Activated B cell treated with CpG ODN at 0.5 μM for 24 hours (primary cell): ENCODE measurements at regions of chr9 and their contacts with region 1.

Region 1: DNA sequence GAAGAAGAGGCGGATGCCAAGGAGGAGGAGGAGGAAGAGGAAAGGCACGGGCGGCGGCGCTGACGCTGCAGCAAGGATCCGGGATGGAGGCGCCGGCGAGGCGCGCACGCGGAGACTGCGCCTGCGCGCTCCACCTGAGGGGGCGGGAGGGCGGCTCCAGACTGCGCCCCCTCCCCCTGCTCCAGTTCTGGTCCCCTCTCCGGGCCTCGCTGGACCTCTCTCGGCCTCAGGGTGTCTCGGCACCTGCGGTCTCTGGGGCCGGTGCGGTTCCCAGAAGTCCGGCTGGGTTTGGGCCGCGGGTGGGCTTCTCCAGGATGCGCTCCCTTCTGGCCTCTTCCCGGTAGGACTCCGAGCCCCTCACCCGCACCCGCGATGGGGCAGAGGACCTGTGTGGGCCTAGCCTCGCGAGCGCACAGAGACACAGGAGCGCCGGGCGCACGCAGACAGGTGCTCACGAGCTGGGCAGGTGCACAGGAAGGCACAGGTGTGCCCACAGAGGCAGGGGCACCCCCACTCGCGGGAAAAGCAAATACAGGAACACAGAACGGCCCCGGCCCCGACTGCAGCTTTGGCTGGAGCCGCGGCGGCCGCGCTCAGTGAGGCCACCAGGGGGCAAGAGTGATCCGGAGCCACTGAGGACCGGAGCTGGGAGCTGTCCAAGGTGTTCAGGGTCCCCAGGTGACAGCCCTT is at the start of gene NPDC1:
- DNase-seq: peak; percentile 76
- ATAC-seq: peak; percentile 93
- H3K4me3 Mint-ChIP-seq: peak within 1 kb of the TSS; percentile 2
- H3K27ac Mint-ChIP-seq: no peak within 1 kb of the TSS
- H3K4me1 Mint-ChIP-seq: peaks cover 16% of the 10 kb centered on the region
- H3K27me3 Mint-ChIP-seq: peaks cover 34% of the 10 kb centered on the region
- CTCF ChIP-seq: peak; percentile 72
- total RNA-seq, gene NPDC1: 0.18 TPM in 1 of 2 replicates, not detected in the other

Region 2: DNA sequence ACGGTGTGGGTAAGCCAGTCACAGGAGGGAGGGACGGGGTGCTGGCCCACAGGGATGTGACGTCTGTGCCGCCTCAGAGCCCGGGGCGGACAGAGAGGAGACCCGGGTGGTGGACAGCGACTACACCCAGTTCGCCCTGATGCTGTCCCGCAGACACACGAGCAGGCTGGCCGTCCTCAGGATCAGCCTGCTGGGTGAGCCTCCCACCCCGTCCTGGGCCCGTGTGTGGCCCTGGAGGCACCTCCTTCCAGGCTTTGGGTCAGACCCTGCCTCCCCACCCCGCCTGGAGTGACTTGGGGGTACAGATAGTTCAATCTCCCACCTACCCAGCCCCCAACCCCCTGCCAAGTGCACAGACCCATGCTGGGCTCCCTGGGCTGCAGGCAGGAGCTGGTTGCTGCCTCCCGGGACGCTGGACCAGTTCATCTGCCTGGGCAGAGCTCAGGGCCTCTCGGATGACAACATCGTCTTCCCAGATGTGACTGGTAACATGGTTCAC is 92.4 kb before region 1 on chr9:
- CTCF ChIA-PET with region 1: no interaction called
- POLR2A ChIA-PET with region 1: no interaction called
- intact Hi-C with region 1: no loop called
- DNase-seq: no peak
- ATAC-seq: no peak
- H3K4me3 Mint-ChIP-seq: no peak overlapping the region
- H3K27ac Mint-ChIP-seq: no peak overlapping the region
- H3K4me1 Mint-ChIP-seq: peaks cover 5% of the 10 kb centered on the region
- H3K27me3 Mint-ChIP-seq: peaks cover 2% of the 10 kb centered on the region
- CTCF ChIP-seq: no peak

Region 3: DNA sequence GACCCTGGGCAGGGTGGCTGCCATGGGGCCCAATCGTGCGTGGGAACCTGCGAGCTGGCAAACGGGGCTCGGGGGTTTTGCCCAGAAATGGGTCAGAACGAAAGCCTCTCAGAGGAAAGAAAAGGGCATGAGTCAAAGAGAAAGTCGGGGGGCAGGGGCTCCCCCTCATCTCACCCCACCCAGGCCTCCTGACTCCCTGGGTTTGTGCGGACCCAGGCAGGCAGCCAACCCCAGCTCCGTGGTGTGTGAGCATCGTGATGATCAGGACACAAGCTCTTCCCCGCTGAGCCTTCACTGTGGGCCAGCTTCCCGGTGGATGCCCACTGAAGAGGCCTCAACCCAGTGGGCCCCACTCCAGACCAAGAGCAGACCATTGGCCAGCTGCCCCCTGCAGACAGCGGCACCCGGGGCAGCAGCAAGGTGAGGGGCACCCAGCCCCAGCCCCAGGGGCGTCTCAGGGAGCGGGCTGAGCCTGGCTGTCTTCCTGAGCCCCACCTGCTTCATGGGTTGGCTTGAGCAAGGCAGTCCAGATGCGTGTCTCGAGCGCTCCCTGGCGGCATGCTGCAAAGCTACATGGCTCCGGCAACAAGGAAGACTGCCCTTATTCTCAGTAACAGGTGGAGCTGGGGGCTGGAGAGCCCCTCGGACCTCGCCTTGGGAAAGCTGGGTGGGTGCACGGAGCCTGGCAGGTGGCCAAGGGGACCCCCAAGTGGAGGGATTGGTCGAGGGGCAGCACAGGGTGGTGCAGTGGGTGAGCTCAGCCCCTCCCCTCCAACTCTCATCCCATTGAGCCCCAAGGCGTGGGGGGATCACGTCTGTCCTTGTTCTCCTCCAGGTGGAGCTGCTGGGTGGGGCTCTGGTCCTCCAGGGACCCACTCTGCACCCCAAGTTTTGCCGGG is 11.1 kb before region 1 on chr9:
- CTCF ChIA-PET with region 1: interaction called, 12 read pairs
- POLR2A ChIA-PET with region 1: interaction called, 5 read pairs
- intact Hi-C with region 1: no loop called
- DNase-seq: peak; percentile 82
- ATAC-seq: peak; percentile 65
- H3K4me3 Mint-ChIP-seq: peak overlapping the region; percentile 67
- H3K27ac Mint-ChIP-seq: peak overlapping the region; percentile 75
- H3K4me1 Mint-ChIP-seq: peaks cover 47% of the 10 kb centered on the region
- H3K27me3 Mint-ChIP-seq: no peaks in the 10 kb centered on the region
- CTCF ChIP-seq: no peak

Region 4: DNA sequence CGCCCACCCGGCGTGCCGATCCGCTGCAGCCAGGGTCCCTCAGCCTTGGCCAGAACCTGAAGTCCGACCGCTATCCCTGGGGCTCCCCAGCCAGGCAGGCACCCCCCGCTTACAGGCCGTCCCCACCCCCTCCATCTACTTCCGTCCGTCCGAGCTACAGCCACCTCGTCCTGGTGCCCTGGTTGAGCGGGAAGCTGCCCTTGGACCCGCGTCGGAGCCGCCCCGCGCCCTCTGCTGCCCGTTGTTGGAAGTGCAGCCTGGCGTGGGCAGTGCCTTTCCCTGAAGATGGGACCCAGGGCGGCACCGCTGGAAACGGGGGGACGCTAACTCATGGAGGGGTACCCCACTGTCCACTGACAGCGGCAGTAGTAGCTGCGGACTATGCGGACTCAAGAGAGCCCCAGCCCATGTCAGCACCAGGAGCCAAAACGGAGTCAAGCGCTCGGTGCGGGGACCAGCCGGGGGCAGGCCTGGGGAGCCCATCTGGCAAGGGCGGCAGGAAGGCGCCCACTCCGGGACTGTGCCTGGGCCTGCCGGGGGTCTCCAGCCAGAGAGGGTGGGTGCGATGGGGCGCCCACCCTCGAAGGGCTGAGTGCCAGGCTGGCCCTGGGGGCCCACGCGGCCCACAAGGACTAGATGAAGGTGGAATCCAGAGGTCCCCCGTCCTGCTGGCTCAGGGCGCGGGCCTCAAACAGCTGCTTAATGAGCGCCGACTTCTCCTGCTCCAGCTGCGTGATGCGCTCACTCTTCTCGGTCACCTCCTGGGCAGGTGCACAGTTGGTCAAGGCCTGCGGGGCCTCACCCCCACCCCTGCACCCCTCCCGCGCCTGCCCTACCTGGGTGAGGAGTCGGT is 18.0 kb after region 1 on chr9:
- CTCF ChIA-PET with region 1: interaction called, 21 read pairs
- POLR2A ChIA-PET with region 1: interaction called, 14 read pairs
- intact Hi-C with region 1: loop called (anchors 1 kb)
- DNase-seq: peak; percentile 65
- ATAC-seq: peak; percentile 26
- H3K4me3 Mint-ChIP-seq: no peak overlapping the region
- H3K27ac Mint-ChIP-seq: no peak overlapping the region
- H3K4me1 Mint-ChIP-seq: peaks cover 8% of the 10 kb centered on the region
- H3K27me3 Mint-ChIP-seq: peaks cover 6% of the 10 kb centered on the region
- CTCF ChIP-seq: peak; percentile 87

Region 5: GRCh38 chr9:137070201-137070905 is 24.1 kb after region 1 on chr9 and contains the start of gene SAPCD2:
- CTCF ChIA-PET with region 1: interaction called, 21 read pairs
- POLR2A ChIA-PET with region 1: interaction called, 10 read pairs
- intact Hi-C with region 1: loop called (anchors 1 kb)
- DNase-seq: peak; percentile 80
- ATAC-seq: peak; percentile 83
- H3K4me3 Mint-ChIP-seq: peak within 1 kb of the TSS; percentile 72
- H3K27ac Mint-ChIP-seq: peak within 1 kb of the TSS; percentile 41
- H3K4me1 Mint-ChIP-seq: peaks cover 24% of the 10 kb centered on the region
- H3K27me3 Mint-ChIP-seq: peaks cover 4% of the 10 kb centered on the region
- CTCF ChIP-seq: no peak
- total RNA-seq, gene SAPCD2: 0.80 and 0.81 TPM in 2 replicates